PC-3 (cell line): ENCODE measurements at regions of chr2 and their contacts with region 1.

Region 1: GRCh38 chr2:64750817-64751285 is 97.1 kb upstream of the SERTAD2 start:
- DNase-seq: peak; percentile 99
- ATAC-seq: peak; percentile 81
- H3K4me3 ChIP-seq: peak overlapping the region; percentile 85
- H3K27ac ChIP-seq: peak overlapping the region; percentile 71
- H3K4me1 ChIP-seq: peaks cover 21% of the 10 kb centered on the region
- H3K27me3 ChIP-seq: no peaks in the 10 kb centered on the region
- CTCF ChIP-seq: peak; percentile 19; the same call in 1 of the 2 replicates

Region 2: GRCh38 chr2:64653349-64654062 is 97.3 kb before region 1 on chr2 and contains the start of gene SERTAD2:
- CTCF ChIA-PET with region 1: interaction called, 13 read pairs
- POLR2A ChIA-PET with region 1: interaction called, 46 read pairs
- intact Hi-C with region 1: loop called (anchors 1 kb)
- DNase-seq: peak; percentile 81
- ATAC-seq: peak; percentile 68
- H3K4me3 ChIP-seq: peak within 1 kb of the TSS; percentile 94
- H3K27ac ChIP-seq: peak within 1 kb of the TSS; percentile 58
- H3K4me1 ChIP-seq: peaks cover 46% of the 10 kb centered on the region
- H3K27me3 ChIP-seq: no peaks in the 10 kb centered on the region
- CTCF ChIP-seq: no peak; the same call in 1 of the 2 replicates
- total RNA-seq, gene SERTAD2: 19.8 and 34.9 TPM in 2 replicates

Region 3: DNA sequence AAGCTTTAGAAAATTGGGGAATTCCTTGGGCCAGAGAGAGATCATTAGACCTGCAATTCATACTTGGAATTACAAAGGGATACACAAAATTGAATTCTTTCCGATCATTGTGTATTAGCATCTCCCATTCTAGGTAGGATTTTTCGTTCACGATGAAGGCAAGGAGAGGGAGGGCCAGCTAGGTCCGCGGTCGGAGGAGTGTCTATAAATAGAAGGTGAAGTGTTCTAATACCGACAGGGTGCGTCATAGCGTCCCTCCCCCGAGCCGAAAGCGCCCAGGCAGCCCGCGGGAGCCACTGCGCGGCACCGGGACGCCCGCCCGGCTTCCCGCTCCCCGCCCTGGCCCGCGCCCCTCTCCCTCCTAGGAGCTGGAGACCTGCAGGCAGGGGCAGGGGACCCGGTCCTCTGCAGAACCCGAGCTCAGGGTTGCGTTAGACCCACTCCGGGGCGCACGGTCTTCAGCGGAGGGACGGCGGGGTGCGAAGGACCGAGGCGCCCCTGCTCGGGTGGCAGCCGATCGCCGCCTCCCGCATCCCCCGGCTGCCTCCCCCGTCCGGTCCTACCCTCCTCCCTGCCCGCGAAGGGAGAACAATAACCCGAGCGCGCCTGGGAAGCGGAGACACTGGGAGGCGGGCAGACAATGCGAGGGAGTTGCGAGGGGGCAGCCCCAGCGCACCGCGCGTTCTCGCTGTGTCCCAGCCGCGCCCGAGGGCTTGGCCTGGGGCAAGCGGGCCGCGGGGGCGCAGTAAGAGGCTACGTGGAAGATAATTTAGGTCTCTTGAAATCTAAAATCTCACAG is 17.0 kb after region 1 on chr2:
- CTCF ChIA-PET with region 1: interaction called, 9 read pairs
- POLR2A ChIA-PET with region 1: interaction called, 19 read pairs
- intact Hi-C with region 1: loop called (anchors 1 kb)
- DNase-seq: peak; percentile 92
- ATAC-seq: peak; percentile 68
- H3K4me3 ChIP-seq: peak overlapping the region; percentile 70
- H3K27ac ChIP-seq: peak overlapping the region; percentile 81
- H3K4me1 ChIP-seq: peaks cover 38% of the 10 kb centered on the region
- H3K27me3 ChIP-seq: no peaks in the 10 kb centered on the region
- CTCF ChIP-seq: no peak

Region 4: DNA sequence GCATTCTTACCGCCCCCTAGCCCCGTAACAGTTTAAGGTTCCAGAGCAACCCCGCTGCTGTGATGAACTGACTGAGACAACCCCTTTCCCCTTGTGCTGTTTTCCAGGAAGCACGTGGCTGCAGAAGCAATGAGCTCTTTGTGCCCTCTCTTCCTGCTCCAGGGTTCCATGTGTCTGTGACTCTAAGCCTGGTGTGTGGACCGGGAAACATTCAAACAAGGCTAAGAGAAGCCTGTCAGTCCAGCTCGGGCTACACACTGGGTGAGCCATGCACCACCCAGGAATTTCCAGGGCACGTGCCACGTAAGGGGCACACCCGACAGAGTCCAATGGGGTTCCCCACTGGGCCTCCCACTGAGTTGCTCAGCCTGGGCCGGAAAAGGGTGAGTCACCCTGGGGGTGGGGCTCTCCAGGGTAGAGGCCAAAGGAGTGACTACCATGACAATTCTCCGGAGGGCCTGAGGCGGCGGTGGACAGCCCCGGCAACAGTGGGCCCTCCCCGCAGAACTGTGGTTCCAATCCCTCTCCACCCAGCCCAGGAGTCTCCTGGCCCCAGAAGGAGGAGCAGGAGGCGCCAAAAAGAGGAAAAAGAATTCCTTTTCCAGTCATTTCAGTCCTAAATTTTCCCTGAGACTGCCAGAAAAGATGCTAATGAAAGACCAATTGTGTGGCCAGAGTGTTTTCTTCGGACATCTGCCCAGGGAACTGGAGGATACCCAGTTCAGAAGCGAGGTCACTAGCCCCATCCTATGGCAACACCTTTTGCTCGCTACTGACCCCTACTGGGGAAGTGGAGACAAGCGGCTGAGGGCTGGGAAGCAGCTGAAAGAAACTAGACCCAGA is 80.5 kb after region 1 on chr2:
- CTCF ChIA-PET with region 1: interaction called, 9 read pairs
- POLR2A ChIA-PET with region 1: interaction called, 11 read pairs
- intact Hi-C with region 1: loop called (anchors 1 kb)
- DNase-seq: peak; percentile 99
- ATAC-seq: peak; percentile 90
- H3K4me3 ChIP-seq: peak overlapping the region; percentile 31; the same call in 1 of the 2 replicates
- H3K27ac ChIP-seq: peak overlapping the region; percentile 93
- H3K4me1 ChIP-seq: peaks cover 61% of the 10 kb centered on the region
- H3K27me3 ChIP-seq: no peaks in the 10 kb centered on the region
- CTCF ChIP-seq: peak; percentile 96

Region 5: DNA sequence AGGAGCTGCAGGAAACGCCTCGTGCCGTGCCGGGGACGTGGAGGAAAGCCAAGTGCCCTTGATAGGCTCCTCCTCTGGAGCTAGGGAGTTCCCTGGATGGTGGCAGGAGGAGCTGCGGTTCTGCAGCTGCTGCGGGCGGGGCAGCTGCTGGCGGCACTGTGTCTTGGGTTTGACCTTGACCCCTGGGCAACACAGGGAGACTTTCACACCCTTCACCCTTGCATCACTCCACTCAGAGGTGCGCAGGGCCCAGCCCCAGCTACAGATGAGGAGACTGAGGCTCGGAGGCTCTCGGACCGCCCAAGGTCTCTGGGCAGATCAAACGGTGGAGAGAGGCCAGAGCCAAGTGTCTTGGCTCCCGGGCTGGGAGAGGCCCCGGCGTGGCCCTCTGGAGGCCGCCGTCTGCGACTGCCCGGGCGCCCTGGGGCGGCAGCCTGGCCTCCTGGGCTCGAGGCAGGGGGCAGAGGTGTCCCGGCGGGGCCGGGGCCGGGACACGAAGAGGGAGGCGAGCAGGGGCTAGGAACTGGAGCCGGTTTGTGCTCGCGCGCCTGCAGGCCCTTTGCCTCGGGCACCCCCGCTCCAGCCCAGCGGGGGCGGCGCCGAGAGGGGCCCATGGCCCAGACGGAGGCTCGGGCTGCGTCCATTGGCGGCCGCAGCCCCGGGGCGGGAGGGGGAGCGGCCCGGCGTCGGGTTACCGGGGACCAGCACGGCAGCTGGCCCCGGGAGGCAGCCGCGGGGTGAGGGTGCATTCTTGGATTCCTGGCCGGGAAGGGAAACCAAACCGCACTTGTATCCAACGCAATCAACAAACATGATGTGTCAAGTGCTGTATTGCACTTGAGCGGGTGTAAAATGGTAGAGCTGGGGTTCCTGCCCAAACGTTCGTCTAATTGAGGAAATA is 108.7 kb after region 1 on chr2:
- CTCF ChIA-PET with region 1: interaction called, 3 read pairs
- POLR2A ChIA-PET with region 1: interaction called, 10 read pairs
- intact Hi-C with region 1: no loop called
- DNase-seq: peak; percentile 86
- ATAC-seq: peak; percentile 81
- H3K4me3 ChIP-seq: peak overlapping the region; percentile 54
- H3K27ac ChIP-seq: peak overlapping the region; percentile 75
- H3K4me1 ChIP-seq: peaks cover 29% of the 10 kb centered on the region
- H3K27me3 ChIP-seq: no peaks in the 10 kb centered on the region
- CTCF ChIP-seq: 0 out of 2 replicates have a peak, but pooled peaks have one; percentile 22

Region 6: GRCh38 chr2:64988420-64989125 is 237.7 kb after region 1 on chr2:
- CTCF ChIA-PET with region 1: no interaction called
- POLR2A ChIA-PET with region 1: interaction called, 24 read pairs
- intact Hi-C with region 1: no loop called
- DNase-seq: no peak
- ATAC-seq: peak; percentile 71
- H3K4me3 ChIP-seq: peak overlapping the region; percentile 97
- H3K27ac ChIP-seq: peak overlapping the region; percentile 57
- H3K4me1 ChIP-seq: peaks cover 17% of the 10 kb centered on the region
- H3K27me3 ChIP-seq: no peaks in the 10 kb centered on the region
- CTCF ChIP-seq: peak; percentile 47

Region 7: DNA sequence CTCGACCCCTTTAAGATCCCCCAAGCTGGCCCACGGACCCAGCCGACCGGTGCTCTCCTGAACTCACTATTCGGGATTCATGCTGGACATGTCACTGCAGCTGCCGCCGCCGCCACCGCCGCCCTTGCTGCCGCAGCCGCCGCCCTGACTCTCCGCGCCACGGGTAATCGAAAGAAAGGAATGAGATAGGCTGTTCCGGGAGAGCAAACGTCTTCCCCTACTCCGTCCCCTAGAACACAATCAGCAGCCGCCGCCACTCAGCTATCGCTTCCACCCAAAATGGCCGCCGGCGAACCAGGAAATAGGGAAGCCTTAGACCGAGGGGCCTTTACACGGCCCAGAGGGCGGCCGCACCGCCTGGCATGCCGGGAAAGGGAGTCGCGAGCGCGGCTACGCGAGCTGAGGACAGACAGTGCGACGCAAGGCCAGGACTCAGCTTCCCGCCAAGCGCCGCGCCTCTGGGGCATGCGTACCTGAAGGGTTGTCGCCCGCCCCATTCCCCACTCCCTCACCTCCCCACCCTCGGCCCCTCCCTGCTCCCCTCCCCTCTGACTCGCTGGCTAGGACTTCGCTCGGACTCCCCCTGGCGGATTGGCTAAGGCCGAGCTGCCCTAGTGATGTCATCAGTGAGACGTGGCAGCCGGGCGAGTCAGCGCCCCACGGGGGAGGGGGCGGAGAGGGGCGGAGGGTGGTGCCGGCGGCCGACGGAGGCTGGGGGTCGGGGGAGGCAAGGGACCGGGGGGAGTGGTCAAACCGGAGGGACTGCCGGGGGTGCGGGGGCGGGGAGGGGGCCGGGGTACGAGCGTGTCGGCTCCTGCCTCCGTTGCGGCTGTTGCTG is 379.2 kb after region 1 on chr2 and contains the start of gene RAB1A:
- CTCF ChIA-PET with region 1: no interaction called
- POLR2A ChIA-PET with region 1: no interaction called
- intact Hi-C with region 1: no loop called
- DNase-seq: peak; percentile 99
- ATAC-seq: peak; percentile 97
- H3K4me3 ChIP-seq: peak within 1 kb of the TSS; percentile 100
- H3K27ac ChIP-seq: peak within 1 kb of the TSS; percentile 78
- H3K4me1 ChIP-seq: peaks cover 19% of the 10 kb centered on the region
- H3K27me3 ChIP-seq: no peaks in the 10 kb centered on the region
- CTCF ChIP-seq: peak; percentile 15; the same call in 1 of the 2 replicates
- total RNA-seq, gene RAB1A: 96.9 and 97.3 TPM in 2 replicates